CD8-positive, alpha-beta T cell (primary cell): ENCODE measurements at regions of chr11 and their contacts with region 1.

Region 1: GRCh38 chr11:33987975-33988580 is 63.5 kb upstream of the CAPRIN1 start:
- DNase-seq: peak; percentile 25 to 86 (median 77)
- ATAC-seq: peak; percentile 83
- H3K4me3 ChIP-seq: no peak overlapping the region
- H3K4me3 Mint-ChIP-seq: no peak overlapping the region
- H3K27ac ChIP-seq: no peak overlapping the region
- H3K27ac Mint-ChIP-seq: no peak overlapping the region
- H3K4me1 ChIP-seq: no peaks in the 10 kb centered on the region
- H3K4me1 Mint-ChIP-seq: peaks cover 18% of the 10 kb centered on the region
- H3K27me3 ChIP-seq: peaks cover 0 to 3% of the 10 kb centered on the region in 2 experiments
- H3K27me3 Mint-ChIP-seq: peaks cover 3% of the 10 kb centered on the region
- CTCF ChIP-seq: peak; percentile 76

Region 2: GRCh38 chr11:33620423-33621171 is 367.5 kb before region 1 on chr11:
- CTCF ChIA-PET with region 1: no interaction called
- POLR2A ChIA-PET with region 1: no interaction called
- intact Hi-C with region 1: no loop called
- DNase-seq: no peak
- ATAC-seq: no peak
- H3K4me3 ChIP-seq: no peak overlapping the region
- H3K4me3 Mint-ChIP-seq: no peak overlapping the region
- H3K27ac ChIP-seq: no peak overlapping the region
- H3K27ac Mint-ChIP-seq: no peak overlapping the region
- H3K4me1 ChIP-seq: no peaks in the 10 kb centered on the region
- H3K4me1 Mint-ChIP-seq: no peaks in the 10 kb centered on the region
- H3K27me3 ChIP-seq: no peaks in the 10 kb centered on the region
- H3K27me3 Mint-ChIP-seq: peaks cover 16% of the 10 kb centered on the region
- CTCF ChIP-seq: no peak

Region 3: DNA sequence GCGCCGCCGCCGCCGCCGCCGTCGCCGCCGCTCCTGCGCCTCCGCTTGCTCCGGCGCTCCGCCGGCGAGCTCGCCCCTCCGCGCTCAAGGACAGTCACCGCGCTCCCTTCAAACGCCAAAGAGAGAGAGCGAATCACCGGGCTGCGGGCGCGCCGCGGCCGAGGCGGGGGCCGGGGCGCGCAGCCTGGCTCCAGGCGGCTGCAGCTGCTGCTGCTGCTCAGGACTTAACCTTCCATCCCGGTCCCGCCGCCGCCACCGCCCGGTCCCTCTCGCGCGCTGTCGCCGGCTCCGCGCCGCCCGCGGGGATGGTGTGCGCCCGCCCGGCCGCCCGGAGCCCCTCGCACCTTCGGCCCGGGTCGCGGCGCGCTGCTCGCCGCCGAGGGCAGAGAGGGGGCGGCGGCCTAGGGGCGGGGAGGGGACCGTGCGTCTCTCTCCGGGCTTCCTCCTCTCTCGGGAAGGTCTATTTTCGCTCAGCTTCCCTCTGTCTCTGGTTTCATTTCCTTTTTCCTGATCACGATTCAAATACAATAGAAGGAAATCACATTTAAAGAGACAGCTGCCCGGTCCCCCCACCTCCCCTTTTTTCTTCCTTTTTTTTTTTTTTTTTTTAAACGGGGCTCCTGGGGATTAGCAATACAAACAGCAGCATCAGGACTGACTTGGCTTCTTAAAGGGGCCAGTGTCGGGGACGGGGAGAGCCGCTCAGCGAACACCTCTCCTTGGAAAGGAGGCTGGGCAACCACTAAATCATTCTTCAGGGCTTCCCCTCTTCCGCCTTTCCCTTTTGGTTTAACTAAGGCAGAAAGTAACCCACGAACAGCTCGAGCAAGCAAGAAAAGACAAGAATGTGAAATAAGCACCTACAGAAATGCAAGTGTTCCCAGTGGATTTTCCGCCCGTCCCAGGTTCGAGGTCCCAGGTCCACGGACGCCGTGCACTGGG is 118.3 kb before region 1 on chr11:
- CTCF ChIA-PET with region 1: interaction called, 6 read pairs
- POLR2A ChIA-PET with region 1: interaction called, 3 read pairs
- intact Hi-C with region 1: loop called in 1 of 2 experiments (anchors 5 kb)
- DNase-seq: peak in 3 of 9 experiments; percentile 10 to 38 (median 22)
- ATAC-seq: peak; percentile 40
- H3K4me3 ChIP-seq: peak overlapping the region; percentile 45 to 52
- H3K4me3 Mint-ChIP-seq: peak overlapping the region; percentile 90
- H3K27ac ChIP-seq: no peak overlapping the region
- H3K27ac Mint-ChIP-seq: no peak overlapping the region
- H3K4me1 ChIP-seq: peaks cover 18% of the 10 kb centered on the region
- H3K4me1 Mint-ChIP-seq: peaks cover 23% of the 10 kb centered on the region
- H3K27me3 ChIP-seq: peaks cover 14 to 26% of the 10 kb centered on the region in 2 experiments
- H3K27me3 Mint-ChIP-seq: peaks cover 64% of the 10 kb centered on the region
- CTCF ChIP-seq: no peak

Region 4: DNA sequence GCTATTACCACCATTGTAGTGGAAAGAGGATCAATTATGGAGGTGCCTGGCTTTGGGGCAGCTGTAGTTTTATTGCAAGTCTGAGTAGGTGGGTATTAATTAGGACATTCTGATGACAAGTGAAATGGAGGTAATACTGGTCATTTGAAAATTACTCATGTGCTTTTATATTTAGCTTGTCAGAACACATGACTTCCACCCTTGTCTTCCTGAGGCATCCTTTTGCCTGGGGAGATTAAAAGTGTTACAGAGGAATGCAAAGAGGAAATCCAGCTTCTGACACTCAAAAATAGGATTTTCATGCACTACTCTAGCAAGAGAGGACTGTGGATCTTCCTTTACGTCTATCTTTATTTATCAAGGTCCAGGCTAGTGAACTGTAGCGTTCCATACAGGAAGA is 18.8 kb after region 1 on chr11:
- CTCF ChIA-PET with region 1: interaction called, 14 read pairs
- POLR2A ChIA-PET with region 1: no interaction called
- intact Hi-C with region 1: no loop called
- DNase-seq: no peak
- ATAC-seq: no peak
- H3K4me3 ChIP-seq: no peak overlapping the region
- H3K4me3 Mint-ChIP-seq: no peak overlapping the region
- H3K27ac ChIP-seq: no peak overlapping the region
- H3K27ac Mint-ChIP-seq: no peak overlapping the region
- H3K4me1 ChIP-seq: no peaks in the 10 kb centered on the region
- H3K4me1 Mint-ChIP-seq: no peaks in the 10 kb centered on the region
- H3K27me3 ChIP-seq: no peaks in the 10 kb centered on the region
- H3K27me3 Mint-ChIP-seq: peaks cover 7% of the 10 kb centered on the region
- CTCF ChIP-seq: no peak